GM12878 (cell line): ENCODE measurements at regions of chr20 and their contacts with region 1.

Region 1: DNA sequence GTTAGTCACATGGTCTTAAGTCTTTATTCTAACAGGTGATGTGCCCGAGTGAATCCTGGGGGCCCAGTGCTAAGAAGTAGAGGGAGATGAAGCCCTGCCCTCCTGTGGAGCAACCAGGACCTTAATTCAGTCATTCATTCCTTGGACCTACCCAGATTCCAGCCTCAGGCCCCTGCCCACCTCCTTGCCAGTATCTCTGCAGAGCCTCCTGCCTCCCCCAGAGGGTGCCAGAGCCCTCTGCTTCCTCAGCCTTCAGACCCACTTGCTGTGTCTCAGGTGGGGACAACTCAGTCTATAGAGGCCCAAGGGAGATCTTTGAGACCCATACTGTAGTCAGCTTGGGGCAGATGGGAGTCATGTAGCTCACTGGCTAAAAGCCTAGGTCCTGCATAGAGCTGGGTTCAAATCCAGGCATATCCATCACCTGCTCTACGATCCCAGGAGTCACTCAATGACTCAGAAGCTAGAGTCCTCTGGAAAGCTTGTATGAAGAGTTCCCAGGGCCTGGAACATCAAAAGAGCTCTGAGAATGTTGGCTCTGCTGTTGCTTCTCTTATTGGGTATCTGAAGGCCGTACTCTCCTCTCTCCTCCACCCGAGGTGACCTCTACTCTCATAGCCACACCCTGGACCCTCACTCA is 3.9 kb upstream of the SIGLEC1 start:
- DNase-seq: no peak
- ATAC-seq: peak; percentile 93
- H3K4me3 ChIP-seq: no peak overlapping the region
- H3K27ac ChIP-seq: no peak overlapping the region
- H3K4me1 ChIP-seq: peaks cover 16% of the 10 kb centered on the region
- H3K27me3 ChIP-seq: no peaks in the 10 kb centered on the region
- CTCF ChIP-seq: peak; percentile 76 to 86 (median 85)
- EP300 ChIP-seq: no peak
- POLR2A ChIP-seq: no peak
- RAD21 ChIP-seq: peak; percentile 85

Region 2: DNA sequence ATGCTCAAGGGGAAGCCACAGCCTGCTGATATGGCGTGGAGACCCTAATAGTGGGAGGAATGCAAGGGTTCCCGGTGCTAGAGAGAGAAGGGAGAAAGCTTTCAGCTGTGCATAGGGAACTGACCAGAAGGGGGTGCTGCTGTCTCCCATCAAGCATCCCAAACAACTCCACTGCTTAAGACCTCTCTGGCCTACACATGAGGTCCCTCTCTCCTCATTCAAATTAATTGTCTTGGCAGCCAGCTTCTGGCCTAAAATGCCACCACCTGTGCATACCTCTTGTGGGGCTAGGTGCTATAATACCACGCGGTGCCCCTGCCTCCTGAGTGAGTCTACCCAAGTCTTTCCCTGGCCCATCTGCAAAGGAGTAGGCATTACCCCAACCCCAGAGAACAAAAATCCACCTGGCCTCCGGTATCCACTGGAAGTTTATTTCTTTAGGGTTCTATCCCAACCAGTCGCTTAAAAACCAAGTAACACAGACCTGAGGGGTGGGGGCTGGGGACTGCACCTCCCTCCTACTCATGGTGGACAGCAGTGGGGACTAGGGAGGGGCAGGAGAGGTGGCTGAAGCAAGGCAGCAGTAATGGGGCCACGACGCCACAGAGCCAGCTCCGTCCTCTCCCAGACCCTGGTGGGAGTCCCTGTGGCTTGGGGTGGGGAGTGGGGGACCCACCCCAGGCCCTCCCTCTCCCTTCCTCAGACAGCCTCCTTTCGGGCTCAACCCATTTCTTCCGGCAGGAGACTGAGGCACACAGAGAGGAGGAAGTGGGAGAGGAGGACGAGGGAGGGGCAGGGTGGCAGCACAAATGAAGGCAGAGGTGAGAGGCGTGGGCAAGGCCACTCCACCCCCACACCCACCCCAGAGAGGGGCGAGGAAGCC is 37.0 kb after region 1 on chr20:
- CTCF ChIA-PET with region 1: interaction called, 6 read pairs
- POLR2A ChIA-PET with region 1: no interaction called
- RAD21 ChIA-PET with region 1: no interaction called
- SMC1A ChIA-PET with region 1: no interaction called
- in situ Hi-C with region 1: no loop called
- intact Hi-C with region 1: loop called (anchors 2 kb)
- DNase-seq: no peak
- ATAC-seq: peak; percentile 83
- H3K4me3 ChIP-seq: no peak overlapping the region
- H3K27ac ChIP-seq: no peak overlapping the region
- H3K4me1 ChIP-seq: no peaks in the 10 kb centered on the region
- H3K27me3 ChIP-seq: no peaks in the 10 kb centered on the region
- CTCF ChIP-seq: peak; percentile 68 to 79 (median 78)
- EP300 ChIP-seq: no peak
- POLR2A ChIP-seq: no peak
- RAD21 ChIP-seq: peak; percentile 64

Region 3: DNA sequence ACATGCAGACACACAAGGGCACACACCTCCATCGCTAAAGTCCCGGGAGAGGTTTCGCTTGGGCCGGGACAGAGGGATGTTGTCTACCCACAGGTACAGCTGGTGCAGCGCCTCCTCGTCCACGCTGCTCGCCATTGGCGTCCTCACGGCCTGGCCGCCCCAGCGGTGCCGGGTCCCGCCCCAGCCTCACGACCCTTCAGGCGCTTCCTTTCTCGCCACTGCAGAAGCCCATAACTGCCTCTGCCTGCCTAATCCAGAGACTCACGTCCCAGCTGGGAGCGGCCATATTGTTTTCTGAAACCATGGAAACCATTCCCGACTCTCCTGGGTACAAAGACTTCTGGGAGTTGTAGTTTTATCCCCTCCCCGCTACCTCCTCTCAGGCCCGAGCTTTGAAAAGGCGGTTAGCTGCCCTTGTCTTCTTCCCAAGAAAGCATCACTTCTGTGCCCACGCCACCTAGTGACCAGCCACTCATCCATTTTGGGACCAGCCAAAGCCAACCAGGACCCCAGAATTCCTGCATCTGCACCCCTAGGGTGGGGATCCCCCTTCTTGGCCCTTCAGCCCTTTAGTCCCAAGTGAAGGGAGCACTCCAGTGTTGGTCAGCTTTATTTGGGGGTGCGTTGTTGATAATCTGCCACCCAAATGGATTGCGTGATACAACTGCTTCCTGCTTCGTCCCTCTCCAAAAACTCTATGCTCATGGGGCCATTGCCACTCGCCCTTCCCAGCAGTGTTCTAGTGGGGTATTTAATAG is 65.0 kb after region 1 on chr20 and contains the start of gene SPEF1:
- CTCF ChIA-PET with region 1: interaction called, 3 read pairs
- POLR2A ChIA-PET with region 1: no interaction called
- RAD21 ChIA-PET with region 1: interaction called, 3 read pairs
- SMC1A ChIA-PET with region 1: interaction called, 6 read pairs
- in situ Hi-C with region 1: no loop called
- intact Hi-C with region 1: loop called (anchors 5 kb)
- DNase-seq: peak; percentile 33
- ATAC-seq: peak; percentile 84
- H3K4me3 ChIP-seq: 0 out of 2 replicates have a peak within 1 kb of the TSS, but pooled peaks have one; percentile 46
- H3K27ac ChIP-seq: no peak within 1 kb of the TSS
- H3K4me1 ChIP-seq: peaks cover 25% of the 10 kb centered on the region
- H3K27me3 ChIP-seq: peaks cover 12 to 16% of the 10 kb centered on the region in 2 experiments
- CTCF ChIP-seq: peak in 2 of 3 experiments; percentile 18 to 33; a peak in 2 of 6 replicates
- EP300 ChIP-seq: no peak
- POLR2A ChIP-seq: peak; percentile 32; the same call in 1 of the 2 replicates
- RAD21 ChIP-seq: no peak
- polyA plus RNA-seq, gene SPEF1: not detected